ENCODE measurements at regions of chr4 and their contacts with region 1.

Region 1: GRCh38 chr4:98150092-98150761 is 7.0 kb upstream of the STPG2 start:
- DNase-seq: no peak
- ATAC-seq: no peak
- H3K4me3 Mint-ChIP-seq: no peak overlapping the region
- H3K27ac Mint-ChIP-seq: no peak overlapping the region
- H3K4me1 Mint-ChIP-seq: peaks cover 25% of the 10 kb centered on the region
- H3K27me3 Mint-ChIP-seq: no peaks in the 10 kb centered on the region
- CTCF ChIP-seq: no peak

Region 2: DNA sequence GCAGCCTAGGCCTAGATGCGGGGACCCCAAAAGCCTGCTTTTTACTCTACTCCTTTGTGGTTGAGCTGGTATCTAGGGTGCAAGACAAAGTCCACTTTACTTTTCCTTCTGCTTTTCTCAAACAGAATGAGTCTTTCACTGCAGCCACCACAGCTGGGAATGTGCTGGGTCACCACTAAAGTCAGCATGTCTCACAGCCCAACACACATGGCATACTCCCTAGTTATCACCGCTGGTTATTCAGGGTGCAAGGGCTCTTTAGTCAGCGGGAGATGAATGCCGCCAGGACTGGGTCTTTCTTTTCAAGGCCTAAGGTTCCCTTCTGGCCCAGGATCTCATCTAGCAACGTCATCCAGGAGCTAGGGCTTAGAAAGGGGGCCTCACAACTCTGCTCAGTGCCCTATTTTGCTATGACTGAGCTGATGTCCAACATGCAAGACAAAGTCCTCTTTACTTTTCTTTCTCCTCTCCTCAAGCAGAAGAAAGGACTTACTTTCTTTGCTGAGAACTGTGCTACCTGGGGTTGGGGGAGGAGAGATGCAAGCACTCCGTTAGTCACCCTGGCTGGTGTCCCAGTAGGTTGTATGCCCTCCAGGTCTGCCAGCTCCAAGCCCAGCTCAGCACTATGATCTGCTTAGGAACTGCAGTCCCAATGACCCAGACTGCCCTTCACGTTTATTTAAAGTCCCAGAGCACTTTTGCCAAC is 16.0 kb after region 1 on chr4:
- CTCF ChIA-PET with region 1: no interaction called
- POLR2A ChIA-PET with region 1: no interaction called
- intact Hi-C with region 1: no loop called
- DNase-seq: no peak
- ATAC-seq: no peak
- H3K4me3 Mint-ChIP-seq: no peak overlapping the region
- H3K27ac Mint-ChIP-seq: no peak overlapping the region
- H3K4me1 Mint-ChIP-seq: no peaks in the 10 kb centered on the region
- H3K27me3 Mint-ChIP-seq: no peaks in the 10 kb centered on the region
- CTCF ChIP-seq: no peak

Region 3: DNA sequence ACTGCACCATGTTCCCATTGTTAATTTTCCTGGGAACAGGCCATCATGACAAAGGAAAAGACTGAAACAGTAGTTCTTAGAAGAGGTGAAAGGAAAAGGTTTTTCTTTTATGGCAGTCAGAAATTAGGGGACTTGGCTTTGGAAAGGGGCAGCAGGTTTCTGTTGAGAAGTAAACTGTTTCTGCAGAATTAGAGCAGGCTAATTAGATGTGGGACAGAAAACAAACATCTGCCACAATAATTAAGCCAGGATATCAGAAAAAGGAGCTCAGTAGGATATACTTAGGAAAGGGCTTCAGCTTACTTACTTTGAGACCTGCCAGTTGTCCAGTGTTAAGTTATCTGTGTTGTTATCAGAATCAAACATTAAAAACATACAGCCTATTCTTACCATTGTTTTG is 29.7 kb after region 1 on chr4:
- CTCF ChIA-PET with region 1: no interaction called
- POLR2A ChIA-PET with region 1: no interaction called
- intact Hi-C with region 1: no loop called
- DNase-seq: no peak
- ATAC-seq: no peak
- H3K4me3 Mint-ChIP-seq: no peak overlapping the region
- H3K27ac Mint-ChIP-seq: no peak overlapping the region
- H3K4me1 Mint-ChIP-seq: peaks cover 4% of the 10 kb centered on the region
- H3K27me3 Mint-ChIP-seq: no peaks in the 10 kb centered on the region
- CTCF ChIP-seq: no peak

Region 4: GRCh38 chr4:98260579-98261290 is 110.5 kb after region 1 on chr4:
- CTCF ChIA-PET with region 1: interaction called, 3 read pairs
- POLR2A ChIA-PET with region 1: interaction called, 14 read pairs
- intact Hi-C with region 1: loop called (anchors 1 kb)
- DNase-seq: peak; percentile 89
- ATAC-seq: peak; percentile 93
- H3K4me3 Mint-ChIP-seq: peak overlapping the region; percentile 95
- H3K27ac Mint-ChIP-seq: peak overlapping the region; percentile 94
- H3K4me1 Mint-ChIP-seq: peaks cover 48% of the 10 kb centered on the region
- H3K27me3 Mint-ChIP-seq: no peaks in the 10 kb centered on the region
- CTCF ChIP-seq: no peak

Region 5: GRCh38 chr4:98446499-98447375 is 296.5 kb after region 1 on chr4:
- CTCF ChIA-PET with region 1: no interaction called
- POLR2A ChIA-PET with region 1: no interaction called
- intact Hi-C with region 1: no loop called
- DNase-seq: no peak
- ATAC-seq: peak; percentile 67
- H3K4me3 Mint-ChIP-seq: peak overlapping the region; percentile 72
- H3K27ac Mint-ChIP-seq: peak overlapping the region; percentile 87
- H3K4me1 Mint-ChIP-seq: peaks cover 41% of the 10 kb centered on the region
- H3K27me3 Mint-ChIP-seq: no peaks in the 10 kb centered on the region
- CTCF ChIP-seq: no peak

Region 6: DNA sequence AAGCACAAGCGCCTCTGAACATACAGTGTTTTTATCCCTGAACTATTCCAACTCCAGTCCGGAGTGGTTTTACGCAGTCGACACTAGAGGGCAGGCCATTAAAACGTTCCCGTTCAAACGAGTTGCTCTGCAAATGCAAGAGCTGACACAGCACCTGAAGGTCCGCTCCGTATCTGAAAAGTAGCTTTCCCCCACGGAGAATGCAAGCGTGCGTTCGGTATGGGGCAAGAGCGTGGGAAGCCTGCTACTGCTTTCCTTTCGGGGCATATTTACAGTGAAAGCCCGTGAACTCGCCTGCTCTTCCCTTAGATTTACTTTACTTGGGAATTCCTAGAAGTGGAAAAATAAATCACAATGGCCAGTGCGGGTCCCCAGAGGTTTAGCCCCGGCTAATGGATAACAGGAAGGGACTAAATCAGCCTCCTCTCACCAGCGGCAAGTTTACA is 317.4 kb after region 1 on chr4:
- CTCF ChIA-PET with region 1: interaction called, 24 read pairs
- POLR2A ChIA-PET with region 1: no interaction called
- intact Hi-C with region 1: loop called (anchors 1 kb)
- DNase-seq: peak; percentile 25
- ATAC-seq: peak; percentile 94
- H3K4me3 Mint-ChIP-seq: peak overlapping the region; percentile 61
- H3K27ac Mint-ChIP-seq: no peak overlapping the region
- H3K4me1 Mint-ChIP-seq: peaks cover 7% of the 10 kb centered on the region
- H3K27me3 Mint-ChIP-seq: no peaks in the 10 kb centered on the region
- CTCF ChIP-seq: peak; percentile 12

Region 7: DNA sequence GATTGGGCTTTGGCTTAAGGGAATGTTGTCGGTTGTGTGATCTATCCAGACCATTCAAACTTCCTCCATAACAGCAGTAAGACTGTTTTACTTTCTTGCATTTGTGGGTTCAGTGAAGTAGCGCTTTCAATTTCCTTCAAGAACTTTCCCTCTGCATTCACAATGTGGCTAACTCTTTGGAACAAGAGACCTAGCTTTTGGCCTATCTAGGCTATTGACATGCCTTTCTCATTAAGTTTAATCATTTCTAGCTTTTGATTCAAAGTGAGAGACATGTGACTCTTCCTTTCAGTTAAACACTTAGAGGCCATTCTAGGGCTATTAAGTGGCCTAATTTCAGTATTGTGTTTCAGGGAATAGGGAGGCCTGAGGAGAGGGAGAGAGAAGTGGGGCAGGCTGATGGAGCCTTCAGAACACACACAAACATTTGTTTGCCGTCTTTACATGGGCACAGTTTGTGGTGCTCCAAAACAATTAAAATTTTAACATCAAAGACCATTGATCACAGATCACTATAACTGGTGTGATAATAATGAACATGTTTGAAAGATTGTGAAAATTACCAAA is 904.3 kb after region 1 on chr4:
- CTCF ChIA-PET with region 1: interaction called, 37 read pairs
- POLR2A ChIA-PET with region 1: no interaction called
- intact Hi-C with region 1: loop called (anchors 1 kb)
- DNase-seq: no peak
- ATAC-seq: no peak
- H3K4me3 Mint-ChIP-seq: no peak overlapping the region
- H3K27ac Mint-ChIP-seq: no peak overlapping the region
- H3K4me1 Mint-ChIP-seq: peaks cover 9% of the 10 kb centered on the region
- H3K27me3 Mint-ChIP-seq: no peaks in the 10 kb centered on the region
- CTCF ChIP-seq: no peak

Region 8: DNA sequence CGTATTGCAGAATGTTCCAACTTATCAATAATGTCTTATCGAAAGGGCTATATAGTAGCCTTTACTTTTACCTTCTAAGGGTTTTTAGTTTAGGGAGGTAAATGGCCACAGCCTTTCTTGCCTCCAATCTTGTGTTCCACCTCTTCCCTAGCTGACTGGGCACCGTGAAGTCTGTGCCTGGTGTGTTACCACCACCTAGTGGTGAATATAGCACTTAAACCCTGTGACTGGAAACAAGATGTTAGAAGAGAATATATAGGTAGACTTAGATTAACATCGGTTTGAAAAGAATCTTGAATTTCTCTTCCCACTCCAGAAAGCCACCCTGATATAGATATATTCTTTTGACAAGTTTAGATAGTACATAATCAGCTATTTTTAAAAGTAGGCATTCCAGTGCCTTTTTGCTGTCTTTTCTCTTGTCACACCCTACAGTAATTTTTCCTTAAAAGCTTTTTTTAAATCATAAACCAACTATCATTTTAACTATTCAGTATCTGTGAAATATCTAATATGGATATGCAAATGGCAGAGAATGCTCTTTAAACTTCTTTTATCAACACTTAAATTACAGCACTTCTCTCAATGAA is 1312.7 kb after region 1 on chr4:
- CTCF ChIA-PET with region 1: interaction called, 4 read pairs
- POLR2A ChIA-PET with region 1: no interaction called
- intact Hi-C with region 1: loop called (anchors 1 kb)
- DNase-seq: no peak
- ATAC-seq: peak; percentile 64
- H3K4me3 Mint-ChIP-seq: no peak overlapping the region
- H3K27ac Mint-ChIP-seq: no peak overlapping the region
- H3K4me1 Mint-ChIP-seq: no peaks in the 10 kb centered on the region
- H3K27me3 Mint-ChIP-seq: peaks cover 10% of the 10 kb centered on the region
- CTCF ChIP-seq: no peak

Measured in activated B cell treated with CpG ODN at 0.5 μM for 24 hours (primary cell).